ENCODE measurements at regions of chr20 and their contacts with region 1.

Region 1: GRCh38 chr20:52494244-52494643 is 302.7 kb upstream of the ZFP64 start:
- DNase-seq: peak; percentile 94
- H3K4me3 ChIP-seq: peak overlapping the region in 1 of 3 experiments; percentile 66
- H3K27ac ChIP-seq: peak overlapping the region; percentile 100
- H3K4me1 ChIP-seq: peaks cover 47% of the 10 kb centered on the region
- H3K27me3 ChIP-seq: no peaks in the 10 kb centered on the region
- CTCF ChIP-seq: no peak
- POLR2A ChIP-seq: peak; percentile 37

Region 2: GRCh38 chr20:52191132-52191915 is 302.9 kb before region 1 on chr20 and contains the start of gene ZFP64:
- CTCF ChIA-PET with region 1: no interaction called
- POLR2A ChIA-PET with region 1: no interaction called
- dilution Hi-C with region 1: no loop called
- intact Hi-C with region 1: loop called (anchors 1 kb)
- DNase-seq: peak; percentile 80
- H3K4me3 ChIP-seq: peak within 1 kb of the TSS; percentile 51 to 83 (median 75)
- H3K27ac ChIP-seq: peak within 1 kb of the TSS; percentile 36
- H3K4me1 ChIP-seq: peaks cover 12% of the 10 kb centered on the region
- H3K27me3 ChIP-seq: no peaks in the 10 kb centered on the region
- CTCF ChIP-seq: peak; percentile 58 to 70
- POLR2A ChIP-seq: peak; percentile 31
- total RNA-seq, gene ZFP64: 31.7 and 34.4 TPM in 2 replicates

Region 3: DNA sequence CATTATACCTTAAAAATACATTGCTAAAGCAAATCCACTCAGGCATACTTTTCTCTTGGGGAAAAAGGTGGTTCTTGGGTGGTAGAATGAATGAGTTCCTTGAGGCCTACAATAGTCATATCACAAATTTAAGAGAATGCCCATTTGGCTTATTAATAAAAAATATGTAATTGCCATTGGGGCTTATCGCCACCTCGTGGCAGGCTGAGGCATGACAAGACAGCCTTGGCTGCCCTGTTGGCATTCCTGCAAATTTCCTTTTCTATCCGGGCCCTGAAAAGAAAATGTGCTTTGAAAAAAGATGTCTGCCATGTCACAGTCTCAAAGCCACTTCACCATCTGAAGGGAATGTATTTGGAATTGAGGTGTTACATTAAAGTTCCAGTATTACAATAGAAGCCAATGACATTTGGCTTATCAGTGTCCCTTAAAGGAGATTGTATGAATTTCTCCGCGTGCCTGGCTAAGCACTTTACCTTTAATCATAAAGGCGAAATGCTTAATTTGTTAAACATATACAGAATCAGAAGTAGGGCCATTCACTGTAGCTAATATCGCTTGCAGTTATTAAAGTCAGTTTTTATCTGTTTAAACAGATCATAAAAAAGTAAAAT is 114.4 kb before region 1 on chr20:
- CTCF ChIA-PET with region 1: no interaction called
- POLR2A ChIA-PET with region 1: no interaction called
- dilution Hi-C with region 1: no loop called
- intact Hi-C with region 1: loop called (anchors 5 kb)
- DNase-seq: peak; percentile 52
- H3K4me3 ChIP-seq: no peak overlapping the region
- H3K27ac ChIP-seq: no peak overlapping the region
- H3K4me1 ChIP-seq: no peaks in the 10 kb centered on the region
- H3K27me3 ChIP-seq: no peaks in the 10 kb centered on the region
- CTCF ChIP-seq: peak; percentile 84 to 90
- POLR2A ChIP-seq: no peak

Region 4: DNA sequence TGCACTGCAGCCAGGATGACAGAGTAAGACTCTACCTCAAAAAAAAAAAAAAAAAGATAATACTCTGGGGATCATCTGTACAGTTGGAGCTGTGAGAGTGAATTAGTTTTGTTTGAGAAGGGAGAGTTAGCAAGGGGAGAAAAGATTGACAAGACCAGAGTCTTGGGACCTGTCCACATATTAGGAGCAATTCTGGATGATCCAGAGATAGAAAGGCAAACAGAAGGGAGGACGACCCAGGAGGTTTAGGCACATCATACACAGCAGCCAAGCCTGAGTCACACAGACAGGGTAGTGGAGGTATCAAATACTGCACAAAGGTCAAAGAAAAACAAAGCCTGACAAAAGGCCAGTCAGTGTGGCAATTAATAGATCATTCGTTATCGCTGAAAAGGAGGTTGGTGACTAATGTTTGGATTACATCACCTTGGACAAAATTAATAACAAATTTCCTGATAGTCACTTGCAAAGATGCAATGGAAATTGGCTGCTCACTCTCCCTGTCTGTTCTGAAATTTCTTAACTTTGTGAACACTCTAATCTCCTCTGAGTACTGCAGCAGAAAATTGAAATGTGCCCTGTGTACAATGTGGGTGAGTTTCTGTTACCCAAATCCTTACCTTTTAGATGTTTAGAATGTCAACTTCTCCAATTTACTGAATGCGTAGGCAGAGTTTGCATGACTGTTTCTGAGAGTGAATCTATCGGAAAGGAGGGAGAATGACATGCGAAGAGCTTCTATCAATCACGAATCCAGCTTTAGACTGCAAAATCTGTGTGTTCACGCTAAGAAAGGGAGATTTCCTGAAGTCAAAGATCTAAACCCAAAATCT is 583.3 kb after region 1 on chr20:
- CTCF ChIA-PET with region 1: no interaction called
- POLR2A ChIA-PET with region 1: no interaction called
- dilution Hi-C with region 1: no loop called
- intact Hi-C with region 1: loop called (anchors 1 kb)
- DNase-seq: peak; percentile 60
- H3K4me3 ChIP-seq: no peak overlapping the region
- H3K27ac ChIP-seq: peak overlapping the region; percentile 38
- H3K4me1 ChIP-seq: peaks cover 32% of the 10 kb centered on the region
- H3K27me3 ChIP-seq: no peaks in the 10 kb centered on the region
- CTCF ChIP-seq: no peak
- POLR2A ChIP-seq: no peak

Region 5: GRCh38 chr20:53899351-53900167 is 1405.3 kb after region 1 on chr20:
- CTCF ChIA-PET with region 1: interaction called, 3 read pairs
- POLR2A ChIA-PET with region 1: no interaction called
- dilution Hi-C with region 1: no loop called
- intact Hi-C with region 1: loop called (anchors 5 kb)
- DNase-seq: peak; percentile 47
- H3K4me3 ChIP-seq: no peak overlapping the region
- H3K27ac ChIP-seq: peak overlapping the region; percentile 97
- H3K4me1 ChIP-seq: peaks cover 50% of the 10 kb centered on the region
- H3K27me3 ChIP-seq: no peaks in the 10 kb centered on the region
- CTCF ChIP-seq: no peak
- POLR2A ChIP-seq: no peak

Region 6: GRCh38 chr20:53949319-53949889 is 1455.2 kb after region 1 on chr20:
- CTCF ChIA-PET with region 1: no interaction called
- POLR2A ChIA-PET with region 1: no interaction called
- dilution Hi-C with region 1: no loop called
- intact Hi-C with region 1: loop called (anchors 5 kb)
- DNase-seq: peak; percentile 63
- H3K4me3 ChIP-seq: no peak overlapping the region
- H3K27ac ChIP-seq: peak overlapping the region; percentile 52
- H3K4me1 ChIP-seq: peaks cover 14% of the 10 kb centered on the region
- H3K27me3 ChIP-seq: no peaks in the 10 kb centered on the region
- CTCF ChIP-seq: no peak
- POLR2A ChIP-seq: no peak

Measured in endothelial cell of umbilical vein (primary cell).